ENCODE measurements at regions of chr15 and their contacts with region 1.

Region 1: DNA sequence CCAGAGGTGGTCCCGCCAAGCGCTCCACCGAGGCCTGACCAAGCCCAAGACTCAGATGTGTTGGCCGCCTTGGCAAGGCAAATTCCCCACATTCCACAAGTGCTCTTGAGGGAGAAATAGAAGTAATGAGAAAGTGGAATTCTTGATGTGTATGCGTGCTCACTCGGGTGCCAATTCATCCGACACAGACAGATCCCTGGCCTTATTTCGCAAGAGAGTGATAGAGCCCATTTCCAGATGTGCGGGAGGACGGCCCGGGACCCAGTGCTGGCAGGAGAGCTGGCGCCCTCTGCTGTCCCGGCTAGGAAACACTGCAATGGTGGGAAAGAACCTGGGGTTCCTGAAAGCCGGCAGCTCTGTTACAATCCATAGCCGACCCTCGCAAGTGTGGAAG is 76.0 kb downstream of the HMG20A start:
- DNase-seq: peak; percentile 85
- H3K4me3 ChIP-seq: peak overlapping the region in 1 of 4 donors; percentile 13
- H3K27ac ChIP-seq: peak overlapping the region; percentile 41 to 83 (median 72)
- H3K4me1 ChIP-seq: peaks cover 13 to 29% (median 19%) of the 10 kb centered on the region in 4 donors
- H3K27me3 ChIP-seq: no peaks in the 10 kb centered on the region
- CTCF ChIP-seq: peak; percentile 88 to 94 (median 92)
- EP300 ChIP-seq: no peak
- POLR2A ChIP-seq: no peak

Region 2: DNA sequence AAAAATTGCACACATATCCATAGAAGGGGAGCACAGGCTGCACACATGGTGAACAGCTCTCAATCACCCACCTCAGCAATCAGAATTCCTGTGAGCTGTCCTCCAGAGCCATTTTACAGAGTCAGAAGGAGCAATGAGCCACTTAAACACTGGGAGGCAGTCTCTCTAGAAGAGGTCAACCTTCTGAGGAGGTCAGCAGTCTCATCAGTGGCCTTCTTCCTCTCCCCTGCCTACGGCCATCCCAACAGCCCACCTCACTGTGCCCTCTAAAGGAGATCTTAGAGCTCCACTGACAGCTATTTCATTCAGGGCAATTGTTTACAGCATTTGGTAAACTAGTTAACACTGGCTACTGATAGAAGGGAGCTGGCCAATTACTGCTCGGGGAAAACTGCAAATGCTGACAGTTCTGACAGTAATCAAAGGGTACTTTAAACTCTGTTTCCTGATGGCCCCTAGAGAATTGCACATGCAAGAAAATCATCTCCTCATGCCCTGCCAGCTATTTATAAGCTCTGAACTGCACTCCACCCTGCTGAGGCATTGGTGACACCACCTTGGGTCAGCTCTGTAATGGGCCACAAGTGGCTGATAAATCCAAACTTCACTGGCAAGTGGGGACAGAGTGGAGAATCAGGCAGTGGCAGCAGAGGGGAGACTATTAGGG is 383.7 kb before region 1 on chr15:
- in situ Hi-C with region 1: loop called in 3 of 4 experiments (anchors 5 to 25 kb)
- intact Hi-C with region 1: no loop called
- DNase-seq: peak; percentile 16
- H3K4me3 ChIP-seq: no peak overlapping the region
- H3K27ac ChIP-seq: peak overlapping the region in 1 of 4 donors; percentile 41
- H3K4me1 ChIP-seq: peaks cover 0 to 15% (median 5%) of the 10 kb centered on the region in 4 donors
- H3K27me3 ChIP-seq: no peaks in the 10 kb centered on the region
- CTCF ChIP-seq: peak in 1 of 5 experiments; percentile 11
- EP300 ChIP-seq: no peak
- POLR2A ChIP-seq: no peak

Region 3: DNA sequence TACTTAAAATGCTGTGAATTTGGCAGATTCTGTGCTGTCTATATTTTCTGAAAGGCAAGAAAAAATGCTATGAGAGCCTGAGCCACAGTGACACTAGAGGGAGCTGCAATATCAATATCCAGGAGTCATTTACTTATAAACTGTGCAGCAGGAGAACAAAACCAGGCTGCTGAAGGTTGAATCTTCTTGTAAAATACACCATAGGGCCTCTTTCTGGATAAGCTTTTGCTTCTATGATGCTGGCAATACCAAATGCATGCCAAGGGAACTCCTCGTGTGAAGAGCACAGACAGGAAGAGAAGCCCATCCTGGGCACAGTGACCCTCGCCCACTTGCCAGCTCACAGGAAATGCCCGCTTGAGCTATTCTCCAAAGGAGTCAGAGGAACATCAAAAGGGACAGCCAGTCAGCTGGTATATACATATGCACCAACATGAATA is 377.8 kb before region 1 on chr15:
- in situ Hi-C with region 1: loop called (anchors 5 to 25 kb)
- intact Hi-C with region 1: no loop called
- DNase-seq: peak; percentile 38
- H3K4me3 ChIP-seq: no peak overlapping the region
- H3K27ac ChIP-seq: no peak overlapping the region
- H3K4me1 ChIP-seq: peaks cover 0 to 30% (median 13%) of the 10 kb centered on the region in 4 donors
- H3K27me3 ChIP-seq: no peaks in the 10 kb centered on the region
- CTCF ChIP-seq: peak; percentile 61 to 75 (median 68)
- EP300 ChIP-seq: no peak
- POLR2A ChIP-seq: no peak

Region 4: GRCh38 chr15:77126529-77127326 is 370.0 kb before region 1 on chr15:
- in situ Hi-C with region 1: loop called in 2 of 4 experiments (anchors 10 to 25 kb)
- intact Hi-C with region 1: no loop called
- DNase-seq: no peak
- H3K4me3 ChIP-seq: no peak overlapping the region
- H3K27ac ChIP-seq: no peak overlapping the region
- H3K4me1 ChIP-seq: peaks cover 0 to 11% (median 2%) of the 10 kb centered on the region in 4 donors
- H3K27me3 ChIP-seq: no peaks in the 10 kb centered on the region
- CTCF ChIP-seq: no peak
- EP300 ChIP-seq: no peak
- POLR2A ChIP-seq: no peak

Region 5: GRCh38 chr15:77419836-77420609 is 76.7 kb before region 1 on chr15 and contains the start of gene PEAK1:
- in situ Hi-C with region 1: no loop called
- intact Hi-C with region 1: loop called (anchors 2 kb)
- DNase-seq: peak; percentile 100
- H3K4me3 ChIP-seq: peak within 1 kb of the TSS; percentile 89 to 99 (median 94)
- H3K27ac ChIP-seq: peak within 1 kb of the TSS; percentile 96 to 98 (median 97)
- H3K4me1 ChIP-seq: peaks cover 0 to 61% (median 41%) of the 10 kb centered on the region in 4 donors
- H3K27me3 ChIP-seq: no peaks in the 10 kb centered on the region
- CTCF ChIP-seq: no peak
- EP300 ChIP-seq: no peak
- POLR2A ChIP-seq: peak; percentile 88
- total RNA-seq, gene PEAK1: 51.1 to 82.2 (median 58.1) TPM

Region 6: GRCh38 chr15:77759896-77760592 is 263.3 kb after region 1 on chr15:
- in situ Hi-C with region 1: no loop called
- intact Hi-C with region 1: no loop called
- DNase-seq: no peak
- H3K4me3 ChIP-seq: no peak overlapping the region
- H3K27ac ChIP-seq: no peak overlapping the region
- H3K4me1 ChIP-seq: no peaks in the 10 kb centered on the region
- H3K27me3 ChIP-seq: peaks cover 6% of the 10 kb centered on the region
- CTCF ChIP-seq: no peak
- EP300 ChIP-seq: no peak
- POLR2A ChIP-seq: no peak